Right cardiac atrium (tissue), 5 donors: ENCODE measurements at regions of chr9 and their contacts with region 1.

Region 1: DNA sequence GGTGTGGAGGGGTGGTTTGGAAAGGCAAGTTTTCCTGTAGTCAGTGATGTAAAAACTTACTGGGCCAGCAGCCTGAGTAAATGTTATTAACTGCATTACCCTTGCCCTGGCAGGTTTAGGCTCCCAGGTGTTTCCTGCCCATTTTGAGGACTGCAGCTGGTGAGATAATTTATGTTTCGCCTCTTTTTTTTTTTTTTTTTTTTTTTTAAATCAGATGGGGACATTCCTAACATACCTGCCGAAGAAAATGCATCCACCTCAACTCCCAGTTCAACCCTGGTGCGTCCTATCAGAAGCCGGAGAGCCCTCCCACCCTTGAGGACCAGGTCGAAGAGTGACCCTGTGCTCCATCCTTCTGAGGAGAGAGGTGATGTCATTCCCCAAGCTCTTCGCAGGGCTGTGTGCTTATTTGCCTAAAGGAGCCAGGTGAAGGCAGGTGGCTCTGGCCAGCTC is 60.6 kb downstream of the ENTREP1 start:
- DNase-seq: no peak
- ATAC-seq: no peak
- H3K4me3 ChIP-seq: no peak overlapping the region
- H3K27ac ChIP-seq: no peak overlapping the region
- H3K4me1 ChIP-seq: no peaks in the 10 kb centered on the region
- H3K27me3 ChIP-seq: no peaks in the 10 kb centered on the region

Region 2: DNA sequence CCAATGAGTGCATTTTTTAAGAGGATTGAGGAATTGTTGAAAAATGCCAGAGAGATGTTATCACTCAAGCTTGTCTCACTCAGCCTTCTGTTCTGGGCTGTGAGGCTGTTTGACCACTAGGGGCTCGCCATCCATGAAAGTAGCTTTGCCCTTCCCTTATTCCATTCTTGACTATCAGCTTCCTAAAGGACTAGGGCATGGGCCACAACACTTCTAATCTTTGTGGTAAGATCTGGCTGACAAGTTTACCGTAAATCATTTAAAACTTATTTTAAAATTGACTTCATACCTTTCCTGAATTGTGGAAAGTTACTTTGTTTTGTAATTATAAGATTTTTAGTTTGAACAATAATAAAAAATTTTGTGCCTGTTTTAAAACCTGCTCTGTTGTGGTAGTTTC is 162.0 kb before region 1 on chr9:
- intact Hi-C with region 1: loop called in 1 of 4 experiments (anchors 10 kb)
- DNase-seq: no peak
- ATAC-seq: peak; percentile 75 to 81
- H3K4me3 ChIP-seq: no peak overlapping the region
- H3K27ac ChIP-seq: no peak overlapping the region
- H3K4me1 ChIP-seq: peaks cover 3% of the 10 kb centered on the region
- H3K27me3 ChIP-seq: no peaks in the 10 kb centered on the region

Region 3: DNA sequence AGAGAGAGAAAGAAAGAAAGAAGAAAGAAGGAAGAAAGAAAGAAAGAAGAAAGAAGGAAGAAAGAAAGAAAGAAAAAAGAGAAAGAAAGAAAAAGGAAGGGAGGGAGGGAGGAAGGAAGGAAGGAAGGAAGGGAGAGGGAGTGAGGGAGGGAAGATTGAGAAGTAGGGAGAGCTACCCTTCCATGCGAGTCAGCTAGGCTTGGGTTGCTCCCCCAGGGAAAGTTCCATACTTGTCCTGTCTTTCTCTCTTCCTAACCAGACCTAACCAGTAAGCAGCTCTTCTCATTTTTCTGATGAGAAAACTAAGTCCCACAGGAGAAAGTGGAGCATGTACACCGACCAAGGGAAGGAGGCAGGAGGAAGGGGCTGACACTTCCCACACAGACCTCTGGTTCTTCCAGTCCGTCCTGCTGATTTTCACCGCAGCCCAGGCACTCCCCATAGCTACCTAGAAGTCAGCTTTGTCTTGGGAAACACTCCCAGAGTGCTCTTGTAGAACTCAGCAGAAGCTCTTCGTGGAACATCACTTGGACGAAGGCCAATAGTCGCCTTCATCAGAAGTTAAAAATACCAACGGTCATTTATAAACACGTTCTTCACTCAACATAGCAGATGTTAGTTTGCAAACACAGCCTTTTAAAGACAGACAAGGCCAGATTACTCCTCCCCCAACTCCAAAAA is 89.6 kb before region 1 on chr9:
- intact Hi-C with region 1: loop called in 1 of 4 experiments (anchors 10 kb)
- DNase-seq: no peak
- ATAC-seq: peak; percentile 72 to 77
- H3K4me3 ChIP-seq: no peak overlapping the region
- H3K27ac ChIP-seq: peak overlapping the region; percentile 77
- H3K4me1 ChIP-seq: no peaks in the 10 kb centered on the region
- H3K27me3 ChIP-seq: no peaks in the 10 kb centered on the region

Region 4: DNA sequence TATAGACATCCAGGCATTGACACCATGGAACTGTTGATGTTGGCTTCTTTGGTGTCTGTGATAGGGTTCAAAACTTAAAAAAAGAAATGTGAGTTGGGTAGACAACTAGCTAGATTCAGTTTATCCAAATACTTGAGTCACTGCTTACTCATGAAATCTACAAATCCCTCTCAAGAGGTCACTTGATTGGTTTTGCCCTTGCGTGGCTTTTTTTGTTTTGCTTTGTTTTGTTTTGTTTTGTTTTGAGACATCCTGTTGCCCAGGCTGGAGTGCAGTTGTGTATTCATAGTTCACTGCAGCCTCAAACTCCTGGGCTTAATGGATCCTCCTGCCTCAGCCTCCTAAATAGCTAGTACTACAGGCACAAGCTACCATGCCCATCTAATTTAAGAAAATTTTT is 71.1 kb before region 1 on chr9:
- intact Hi-C with region 1: no loop called
- DNase-seq: no peak
- ATAC-seq: no peak
- H3K4me3 ChIP-seq: no peak overlapping the region
- H3K27ac ChIP-seq: no peak overlapping the region
- H3K4me1 ChIP-seq: no peaks in the 10 kb centered on the region
- H3K27me3 ChIP-seq: no peaks in the 10 kb centered on the region

Region 5: GRCh38 chr9:69324549-69325401 is 60.8 kb before region 1 on chr9 and contains the start of gene ENTREP1:
- intact Hi-C with region 1: loop called in 2 of 4 experiments (anchors 10 kb)
- DNase-seq: peak; percentile 76 to 91 (median 87)
- ATAC-seq: peak; percentile 95 to 97
- H3K4me3 ChIP-seq: peak within 1 kb of the TSS; percentile 77
- H3K27ac ChIP-seq: peak within 1 kb of the TSS; percentile 80
- H3K4me1 ChIP-seq: no peaks in the 10 kb centered on the region
- H3K27me3 ChIP-seq: no peaks in the 10 kb centered on the region
- total RNA-seq, gene ENTREP1: 16.7 to 29.2 (median 25.7) TPM

Region 6: DNA sequence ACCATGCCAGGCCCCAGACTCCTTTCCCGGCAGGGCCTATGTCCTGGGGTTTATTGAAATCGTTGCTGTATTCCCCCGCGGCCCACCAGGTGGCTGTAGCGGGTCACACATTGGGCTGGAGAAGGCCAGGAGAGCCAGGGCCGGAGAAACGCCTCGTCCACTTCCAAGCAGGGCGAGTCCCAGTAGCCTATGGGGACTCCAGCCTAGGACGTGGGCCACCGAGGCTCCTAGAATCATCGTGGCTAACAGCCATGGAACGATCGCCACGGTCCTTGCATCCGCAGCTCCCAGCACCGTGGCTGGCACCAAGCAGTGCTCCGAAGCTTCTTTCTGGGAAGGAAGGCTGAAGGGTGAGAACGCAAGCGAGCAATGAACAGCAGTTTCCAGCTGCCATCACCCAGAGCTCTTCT is 27.1 kb after region 1 on chr9:
- intact Hi-C with region 1: no loop called
- DNase-seq: peak; percentile 77 to 90 (median 88)
- ATAC-seq: peak; percentile 95 to 97
- H3K4me3 ChIP-seq: no peak overlapping the region
- H3K27ac ChIP-seq: no peak overlapping the region
- H3K4me1 ChIP-seq: no peaks in the 10 kb centered on the region
- H3K27me3 ChIP-seq: no peaks in the 10 kb centered on the region